SK-N-SH (cell line): ENCODE measurements at regions of chr2 and their contacts with region 1.

Region 1: GRCh38 chr2:14903709-14904374 is 271.3 kb downstream of the LRATD1 start:
- DNase-seq: peak; percentile 72
- H3K4me3 ChIP-seq: no peak overlapping the region; a peak in 1 of 4 replicates
- H3K27ac ChIP-seq: no peak overlapping the region
- H3K4me1 ChIP-seq: peaks cover 0 to 5% of the 10 kb centered on the region in 2 experiments; a peak in 2 of 4 replicates
- H3K27me3 ChIP-seq: no peaks in the 10 kb centered on the region
- CTCF ChIP-seq: peak; percentile 49
- EP300 ChIP-seq: no peak
- RAD21 ChIP-seq: peak; percentile 48

Region 2: GRCh38 chr2:14524057-14524802 is 379.6 kb before region 1 on chr2:
- CTCF ChIA-PET with region 1: no interaction called
- POLR2A ChIA-PET with region 1: no interaction called
- DNase-seq: no peak
- H3K4me3 ChIP-seq: no peak overlapping the region
- H3K27ac ChIP-seq: no peak overlapping the region
- H3K4me1 ChIP-seq: 0 out of 4 replicates have a peak, but pooled peaks cover 0 to 3% of the 10 kb centered on the region in 2 experiments
- H3K27me3 ChIP-seq: no peaks in the 10 kb centered on the region
- CTCF ChIP-seq: no peak
- EP300 ChIP-seq: peak in 1 of 2 experiments; percentile 21; a peak in 1 of 4 replicates
- RAD21 ChIP-seq: no peak

Region 3: GRCh38 chr2:14891546-14891945 is 12.3 kb before region 1 on chr2:
- CTCF ChIA-PET with region 1: interaction called, 14 read pairs
- POLR2A ChIA-PET with region 1: no interaction called
- DNase-seq: no peak
- H3K4me3 ChIP-seq: no peak overlapping the region
- H3K27ac ChIP-seq: no peak overlapping the region
- H3K4me1 ChIP-seq: no peaks in the 10 kb centered on the region
- H3K27me3 ChIP-seq: no peaks in the 10 kb centered on the region
- CTCF ChIP-seq: no peak
- EP300 ChIP-seq: no peak
- RAD21 ChIP-seq: no peak